ENCODE measurements at regions of chr2 and their contacts with region 1.

Region 1: GRCh38 chr2:201071479-201072200 is at the starts of genes HYCC2 and NDUFB3:
- DNase-seq: peak; percentile 95
- H3K4me3 Mint-ChIP-seq: peak within 1 kb of the TSS; percentile 89
- H3K27ac Mint-ChIP-seq: peak within 1 kb of the TSS; percentile 93
- H3K4me1 Mint-ChIP-seq: peaks cover 53% of the 10 kb centered on the region
- H3K27me3 Mint-ChIP-seq: no peaks in the 10 kb centered on the region

Region 2: DNA sequence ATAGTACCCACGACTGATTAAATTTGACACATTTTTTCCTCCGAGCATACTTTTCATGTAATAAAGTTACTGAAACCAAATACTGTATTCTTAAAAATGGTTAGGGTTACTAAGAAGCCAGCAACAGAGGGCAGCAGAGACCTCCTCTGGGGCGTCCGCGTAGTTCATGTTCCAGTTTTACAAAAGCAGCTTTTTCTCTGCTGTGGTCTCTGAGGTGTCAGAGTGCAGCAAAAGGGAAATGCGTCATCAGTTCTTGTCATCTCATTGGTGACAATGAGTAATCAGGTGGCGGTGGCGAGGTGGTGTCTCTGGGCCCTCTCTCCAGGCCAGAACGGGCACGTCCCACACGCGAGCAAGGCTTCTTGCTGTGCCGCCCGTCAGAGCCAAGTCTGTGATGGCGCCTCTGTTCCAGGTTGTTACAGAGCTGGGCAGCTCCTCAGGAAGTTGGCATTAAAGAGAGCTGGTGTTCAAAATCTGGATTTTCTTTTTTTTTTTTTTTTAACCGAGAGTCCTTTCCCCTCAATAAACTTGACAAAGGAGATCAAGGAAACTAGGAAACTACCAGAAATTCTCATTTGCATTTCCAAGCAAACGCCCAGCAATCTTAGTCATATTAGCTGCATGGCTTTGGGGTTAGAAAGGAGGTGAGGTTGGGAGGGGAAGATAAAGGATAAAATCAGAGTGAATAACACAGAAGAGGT is 358.5 kb before region 1 on chr2:
- CTCF ChIA-PET with region 1: interaction called, 11 read pairs
- DNase-seq: peak; percentile 96
- H3K4me3 Mint-ChIP-seq: peak overlapping the region; percentile 68
- H3K27ac Mint-ChIP-seq: peak overlapping the region; percentile 99
- H3K4me1 Mint-ChIP-seq: peaks cover 23% of the 10 kb centered on the region
- H3K27me3 Mint-ChIP-seq: peaks cover 7% of the 10 kb centered on the region

Region 3: GRCh38 chr2:200901459-200902072 is 170.1 kb before region 1 on chr2:
- CTCF ChIA-PET with region 1: interaction called, 104 read pairs
- DNase-seq: peak; percentile 84
- H3K4me3 Mint-ChIP-seq: no peak overlapping the region
- H3K27ac Mint-ChIP-seq: peak overlapping the region; percentile 75
- H3K4me1 Mint-ChIP-seq: peaks cover 11% of the 10 kb centered on the region
- H3K27me3 Mint-ChIP-seq: no peaks in the 10 kb centered on the region

Region 4: GRCh38 chr2:200922439-200922838 is 149.2 kb before region 1 on chr2:
- CTCF ChIA-PET with region 1: interaction called, 10 read pairs
- DNase-seq: no peak
- H3K4me3 Mint-ChIP-seq: no peak overlapping the region
- H3K27ac Mint-ChIP-seq: no peak overlapping the region
- H3K4me1 Mint-ChIP-seq: no peaks in the 10 kb centered on the region
- H3K27me3 Mint-ChIP-seq: no peaks in the 10 kb centered on the region

Region 5: GRCh38 chr2:200963124-200963917 is 108.3 kb before region 1 on chr2 and contains the start of gene ORC2:
- CTCF ChIA-PET with region 1: interaction called, 28 read pairs
- DNase-seq: peak; percentile 94
- H3K4me3 Mint-ChIP-seq: peak within 1 kb of the TSS; percentile 91
- H3K27ac Mint-ChIP-seq: peak within 1 kb of the TSS; percentile 92
- H3K4me1 Mint-ChIP-seq: peaks cover 65% of the 10 kb centered on the region
- H3K27me3 Mint-ChIP-seq: no peaks in the 10 kb centered on the region

Region 6: DNA sequence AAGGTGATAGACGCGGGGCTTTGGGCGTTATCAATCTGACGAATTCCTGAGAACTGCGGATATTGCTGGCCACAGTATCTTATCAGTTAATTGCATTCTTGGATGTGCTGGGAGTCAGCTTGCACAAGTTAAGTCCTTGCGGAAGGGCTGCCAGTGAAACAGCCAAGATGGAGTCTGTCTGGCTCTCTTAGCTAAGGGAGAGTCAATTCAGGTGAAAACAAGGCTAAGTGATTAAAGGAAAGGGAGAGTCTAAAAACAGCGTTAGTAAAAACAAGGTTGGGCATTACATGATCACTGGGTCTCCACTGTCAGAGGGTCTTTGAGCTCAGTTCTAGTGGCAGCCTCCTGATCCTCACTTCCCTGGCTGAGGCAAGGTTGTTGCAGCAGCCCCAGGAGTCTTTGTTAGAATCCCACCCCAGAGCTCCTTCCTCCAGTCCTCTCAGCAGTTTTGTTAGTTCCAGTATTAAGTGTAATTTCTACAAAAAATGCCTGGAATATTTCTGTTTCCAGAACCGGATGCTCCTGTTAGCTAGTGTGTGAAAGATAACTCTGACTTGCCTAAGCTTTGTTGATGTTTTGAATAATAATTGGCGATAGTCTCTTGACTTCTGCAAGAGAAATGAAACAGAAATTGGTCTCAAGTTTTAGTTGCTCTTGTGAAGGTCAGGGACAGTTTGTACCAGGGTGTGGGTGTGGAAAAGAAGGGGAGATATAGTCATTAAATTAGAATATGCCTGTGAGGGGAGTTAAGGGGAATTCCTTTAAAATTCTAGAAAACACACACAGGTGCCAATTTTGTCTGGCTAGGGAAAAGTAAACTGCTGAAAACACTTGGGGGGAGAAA is 54.9 kb after region 1 on chr2:
- CTCF ChIA-PET with region 1: no interaction called
- DNase-seq: no peak
- H3K4me3 Mint-ChIP-seq: peak overlapping the region; percentile 73
- H3K27ac Mint-ChIP-seq: peak overlapping the region; percentile 94
- H3K4me1 Mint-ChIP-seq: peaks cover 91% of the 10 kb centered on the region
- H3K27me3 Mint-ChIP-seq: no peaks in the 10 kb centered on the region

Region 7: GRCh38 chr2:201158111-201158929 is 86.7 kb after region 1 on chr2:
- CTCF ChIA-PET with region 1: interaction called, 32 read pairs
- DNase-seq: peak; percentile 80
- H3K4me3 Mint-ChIP-seq: no peak overlapping the region
- H3K27ac Mint-ChIP-seq: peak overlapping the region; percentile 78
- H3K4me1 Mint-ChIP-seq: peaks cover 13% of the 10 kb centered on the region
- H3K27me3 Mint-ChIP-seq: no peaks in the 10 kb centered on the region

Measured in activated naive CD4-positive, alpha-beta T cell treated with anti-CD3 and anti-CD28 coated beads, Interleukin-2, amount 10 ng/mL, durations not matched to agents 7 days and 5 days (primary cell).